Natural killer cell (primary cell): ENCODE measurements at regions of chr2 and their contacts with region 1.

Region 1: GRCh38 chr2:207423886-207424285 is 105.9 kb upstream of the CREB1 start:
- DNase-seq: peak; percentile 42 to 61
- ATAC-seq: peak; percentile 87 to 100 (median 87)
- H3K4me3 ChIP-seq: no peak overlapping the region
- H3K4me3 Mint-ChIP-seq: peak overlapping the region; percentile 76
- H3K27ac ChIP-seq: peak overlapping the region; percentile 1
- H3K27ac Mint-ChIP-seq: peak overlapping the region; percentile 82 to 86
- H3K4me1 ChIP-seq: peaks cover 16% of the 10 kb centered on the region
- H3K4me1 Mint-ChIP-seq: peaks cover 36 to 39% of the 10 kb centered on the region in 2 donors
- H3K27me3 ChIP-seq: peaks cover 10% of the 10 kb centered on the region
- H3K27me3 Mint-ChIP-seq: peaks cover 36 to 40% of the 10 kb centered on the region in 2 donors
- CTCF ChIP-seq: no peak

Region 2: GRCh38 chr2:207467716-207468347 is 43.9 kb after region 1 on chr2:
- intact Hi-C with region 1: loop called (anchors 2 kb)
- DNase-seq: peak in 1 of 2 donors; percentile 29
- ATAC-seq: peak; percentile 73 to 83 (median 82)
- H3K4me3 ChIP-seq: no peak overlapping the region
- H3K4me3 Mint-ChIP-seq: peak overlapping the region; percentile 11
- H3K27ac ChIP-seq: no peak overlapping the region
- H3K27ac Mint-ChIP-seq: peak overlapping the region; percentile 32 to 87
- H3K4me1 ChIP-seq: peaks cover 3% of the 10 kb centered on the region
- H3K4me1 Mint-ChIP-seq: peaks cover 11 to 27% of the 10 kb centered on the region in 2 donors
- H3K27me3 ChIP-seq: no peaks in the 10 kb centered on the region
- H3K27me3 Mint-ChIP-seq: peaks cover 5 to 8% of the 10 kb centered on the region in 2 donors
- CTCF ChIP-seq: no peak

Region 3: DNA sequence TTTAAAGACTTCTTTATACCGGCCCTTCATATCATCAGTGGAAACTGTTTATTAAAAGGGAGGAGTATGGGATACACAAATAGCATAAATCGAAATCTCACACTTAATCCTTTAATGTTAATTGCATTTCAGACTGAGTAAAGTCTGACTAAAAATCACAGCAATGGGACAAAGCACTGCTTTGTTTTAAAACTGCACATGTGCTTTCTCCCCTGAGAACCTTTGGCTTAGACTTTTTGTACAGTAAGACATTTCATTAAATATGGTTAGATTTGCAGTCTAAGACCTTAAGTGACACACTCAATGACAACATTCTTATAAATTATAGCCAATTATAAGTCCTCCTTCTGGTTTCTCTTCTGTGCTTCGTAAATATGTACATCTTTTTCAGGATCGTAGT is 188.8 kb after region 1 on chr2:
- intact Hi-C with region 1: no loop called
- DNase-seq: no peak
- ATAC-seq: no peak
- H3K4me3 ChIP-seq: no peak overlapping the region
- H3K4me3 Mint-ChIP-seq: no peak overlapping the region
- H3K27ac ChIP-seq: no peak overlapping the region
- H3K27ac Mint-ChIP-seq: no peak overlapping the region
- H3K4me1 ChIP-seq: no peaks in the 10 kb centered on the region
- H3K4me1 Mint-ChIP-seq: peaks cover 0 to 9% of the 10 kb centered on the region in 2 donors
- H3K27me3 ChIP-seq: no peaks in the 10 kb centered on the region
- H3K27me3 Mint-ChIP-seq: no peaks in the 10 kb centered on the region
- CTCF ChIP-seq: no peak